ENCODE measurements at regions of chr11 and their contacts with region 1.

Region 1: GRCh38 chr11:19742588-19743292 is 30.1 kb downstream of the NAV2 start:
- DNase-seq: peak; percentile 88
- ATAC-seq: peak; percentile 90
- H3K4me3 Mint-ChIP-seq: no peak overlapping the region
- H3K27ac Mint-ChIP-seq: no peak overlapping the region
- H3K4me1 Mint-ChIP-seq: peaks cover 23% of the 10 kb centered on the region
- H3K27me3 Mint-ChIP-seq: no peaks in the 10 kb centered on the region
- CTCF ChIP-seq: peak; percentile 74; the same call in 1 of the 2 replicates

Region 2: DNA sequence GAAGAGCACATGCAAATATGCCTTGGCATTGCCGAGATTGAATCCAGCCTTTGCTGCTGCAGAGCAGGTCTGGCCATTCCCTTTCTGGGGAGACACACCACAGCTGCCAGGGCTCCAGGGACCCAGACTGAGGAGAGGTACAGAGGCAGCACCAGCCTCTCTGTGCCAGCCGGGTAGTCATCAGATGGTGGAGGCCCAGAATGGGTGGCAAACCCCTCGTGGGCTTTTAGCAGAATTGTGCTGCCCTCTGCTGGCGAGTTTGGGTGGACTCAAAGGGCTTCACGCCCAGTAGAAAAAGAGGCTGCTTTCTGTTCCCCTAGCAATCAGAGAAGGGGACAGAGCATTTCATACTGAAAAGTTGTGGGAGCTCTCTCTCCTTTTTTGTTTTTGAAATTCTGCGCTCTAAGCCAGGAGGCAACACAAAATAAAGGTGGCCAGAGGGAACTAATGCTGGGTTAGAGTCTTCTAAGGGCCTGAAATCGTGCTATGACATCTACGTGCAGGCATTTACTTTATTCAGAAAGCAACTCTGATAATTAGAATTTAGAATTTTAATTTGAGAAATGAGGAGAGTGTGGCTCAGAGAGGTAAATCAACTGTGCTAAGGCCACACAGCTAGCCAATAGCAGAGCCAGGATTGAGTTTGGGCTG is 188.9 kb before region 1 on chr11:
- CTCF ChIA-PET with region 1: interaction called, 20 read pairs
- POLR2A ChIA-PET with region 1: interaction called, 3 read pairs
- DNase-seq: peak; percentile 87
- ATAC-seq: peak; percentile 50
- H3K4me3 Mint-ChIP-seq: no peak overlapping the region
- H3K27ac Mint-ChIP-seq: no peak overlapping the region
- H3K4me1 Mint-ChIP-seq: peaks cover 24% of the 10 kb centered on the region
- H3K27me3 Mint-ChIP-seq: no peaks in the 10 kb centered on the region; the same call in 1 of the 2 replicates
- CTCF ChIP-seq: peak; percentile 86

Region 3: DNA sequence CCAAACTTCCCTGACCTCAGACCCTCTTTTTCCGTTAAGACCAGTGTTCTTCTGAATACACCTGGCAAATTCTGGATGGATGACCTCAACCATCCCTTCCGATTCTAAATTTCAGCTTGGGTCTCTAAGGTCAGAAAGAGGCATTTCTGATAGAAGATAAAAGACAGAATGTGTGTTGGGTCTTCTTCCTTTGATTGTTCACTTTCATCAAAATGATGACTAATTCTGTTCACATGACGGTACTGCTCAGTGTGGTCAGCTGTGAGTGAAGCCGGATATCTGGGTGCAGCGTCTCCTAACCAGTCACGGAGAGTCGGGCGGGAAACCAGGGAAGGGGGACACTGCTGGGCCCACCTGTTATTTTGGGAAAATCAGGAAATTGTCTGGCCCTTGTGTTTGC is 181.7 kb before region 1 on chr11:
- CTCF ChIA-PET with region 1: interaction called, 56 read pairs
- POLR2A ChIA-PET with region 1: interaction called, 3 read pairs
- DNase-seq: no peak
- ATAC-seq: no peak
- H3K4me3 Mint-ChIP-seq: no peak overlapping the region
- H3K27ac Mint-ChIP-seq: no peak overlapping the region
- H3K4me1 Mint-ChIP-seq: peaks cover 20% of the 10 kb centered on the region
- H3K27me3 Mint-ChIP-seq: no peaks in the 10 kb centered on the region; the same call in 1 of the 2 replicates
- CTCF ChIP-seq: no peak

Region 4: GRCh38 chr11:19673924-19674729 is 68.6 kb before region 1 on chr11:
- CTCF ChIA-PET with region 1: interaction called, 10 read pairs
- POLR2A ChIA-PET with region 1: no interaction called
- DNase-seq: no peak
- ATAC-seq: peak; percentile 52
- H3K4me3 Mint-ChIP-seq: no peak overlapping the region
- H3K27ac Mint-ChIP-seq: no peak overlapping the region
- H3K4me1 Mint-ChIP-seq: peaks cover 51% of the 10 kb centered on the region
- H3K27me3 Mint-ChIP-seq: no peaks in the 10 kb centered on the region; the same call in 1 of the 2 replicates
- CTCF ChIP-seq: no peak

Region 5: GRCh38 chr11:19714387-19715363 is 28.1 kb before region 1 on chr11:
- CTCF ChIA-PET with region 1: interaction called, 15 read pairs
- POLR2A ChIA-PET with region 1: no interaction called
- DNase-seq: peak; percentile 47
- ATAC-seq: peak; percentile 11
- H3K4me3 Mint-ChIP-seq: peak overlapping the region; percentile 83
- H3K27ac Mint-ChIP-seq: no peak overlapping the region
- H3K4me1 Mint-ChIP-seq: peaks cover 22% of the 10 kb centered on the region
- H3K27me3 Mint-ChIP-seq: peaks cover 60% of the 10 kb centered on the region
- CTCF ChIP-seq: no peak

Region 6: DNA sequence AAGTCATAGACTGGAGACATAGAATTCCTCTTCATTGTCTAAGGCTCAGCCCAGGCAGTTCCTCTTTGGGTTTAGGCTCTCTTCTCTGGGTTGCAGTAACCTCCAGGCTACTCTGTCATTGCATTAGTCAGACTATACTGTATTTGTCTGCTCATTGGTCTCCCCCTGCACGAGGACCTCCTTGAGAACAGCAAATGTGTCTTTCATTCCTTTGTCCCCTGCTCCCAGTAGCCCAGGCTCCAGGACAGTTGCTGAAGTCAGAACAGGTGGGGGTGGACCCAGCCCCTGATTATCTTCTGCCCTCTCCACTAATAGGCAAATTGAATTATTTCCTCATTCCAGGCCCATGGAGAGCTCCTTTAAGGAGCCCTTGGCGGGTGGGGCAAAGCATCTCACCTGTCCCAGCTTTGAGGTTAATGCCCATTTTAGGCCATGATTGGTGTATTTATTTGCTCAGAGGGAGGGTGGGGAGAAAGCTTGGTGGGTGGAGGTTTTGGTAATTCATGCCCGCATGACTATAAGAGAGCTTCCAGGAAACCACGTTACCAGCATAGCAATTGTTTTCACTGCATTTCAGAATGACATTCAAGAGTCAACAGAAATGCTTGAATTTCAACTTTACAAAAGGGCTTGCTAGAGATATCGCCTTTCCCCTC is 10.8 kb after region 1 on chr11:
- CTCF ChIA-PET with region 1: interaction called, 11 read pairs
- POLR2A ChIA-PET with region 1: no interaction called
- DNase-seq: no peak
- ATAC-seq: peak; percentile 67
- H3K4me3 Mint-ChIP-seq: no peak overlapping the region
- H3K27ac Mint-ChIP-seq: no peak overlapping the region
- H3K4me1 Mint-ChIP-seq: peaks cover 29% of the 10 kb centered on the region
- H3K27me3 Mint-ChIP-seq: peaks cover 4% of the 10 kb centered on the region; the same call in 1 of the 2 replicates
- CTCF ChIP-seq: no peak

Region 7: GRCh38 chr11:19800162-19800561 is 57.4 kb after region 1 on chr11:
- CTCF ChIA-PET with region 1: interaction called, 12 read pairs
- POLR2A ChIA-PET with region 1: no interaction called
- DNase-seq: peak; percentile 27
- ATAC-seq: no peak; the same call in 1 of the 2 replicates
- H3K4me3 Mint-ChIP-seq: no peak overlapping the region
- H3K27ac Mint-ChIP-seq: 0 out of 2 replicates have a peak overlapping the region, but pooled peaks have one; percentile 15
- H3K4me1 Mint-ChIP-seq: peaks cover 79% of the 10 kb centered on the region
- H3K27me3 Mint-ChIP-seq: no peaks in the 10 kb centered on the region; the same call in 1 of the 2 replicates
- CTCF ChIP-seq: no peak

Measured in WTC11 (cell line).